Left cardiac atrium (tissue), 4 donors: ENCODE measurements at regions of chr10 and their contacts with region 1.

Region 1: GRCh38 chr10:123008439-123009205 is at the starts of genes ACADSB and IKZF5:
- DNase-seq: peak; percentile 96
- ATAC-seq: peak; percentile 99
- total RNA-seq, gene ACADSB: 51.3 to 55.1 TPM
- total RNA-seq, gene IKZF5: 10.4 to 12.1 TPM

Region 2: DNA sequence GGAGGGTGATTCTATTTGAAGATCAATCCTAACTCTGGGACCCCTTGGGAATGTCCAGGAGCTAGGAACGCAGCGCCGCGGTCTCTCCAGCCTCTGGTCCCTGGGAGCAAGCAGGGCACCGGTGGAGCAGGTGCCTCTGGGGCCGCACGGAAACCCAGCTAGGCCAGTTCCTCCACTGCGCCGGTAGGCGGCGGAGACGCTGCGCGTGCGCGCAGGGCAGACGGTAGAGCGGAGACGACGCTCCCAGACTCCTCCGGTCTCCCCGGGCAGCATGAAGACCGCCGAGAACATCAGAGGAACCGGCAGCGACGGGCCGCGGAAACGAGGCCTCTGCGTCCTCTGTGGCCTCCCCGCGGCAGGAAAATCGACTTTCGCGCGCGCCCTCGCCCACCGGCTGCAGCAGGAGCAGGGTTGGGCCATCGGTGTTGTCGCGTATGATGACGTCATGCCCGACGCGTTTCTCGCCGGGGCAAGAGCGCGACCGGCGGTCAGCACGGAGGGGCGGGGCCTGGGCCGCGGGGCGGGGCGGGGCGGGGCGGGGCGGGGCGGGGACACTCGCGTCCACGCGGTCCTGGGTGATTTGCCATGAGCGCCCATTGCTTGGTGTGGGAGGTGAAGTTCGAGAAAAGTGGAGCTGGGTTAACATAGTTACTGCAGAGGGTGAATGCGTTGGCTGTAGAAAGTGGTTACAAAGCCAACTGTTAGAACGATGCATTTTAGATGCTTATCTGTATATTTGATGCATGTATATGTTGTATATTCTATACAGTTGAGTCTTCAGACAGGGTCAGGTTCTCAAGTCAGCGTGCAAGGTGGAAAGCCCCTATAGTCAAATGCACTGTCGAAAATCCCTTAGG is 28.2 kb before region 1 on chr10 and contains the start of gene PSTK:
- intact Hi-C with region 1: loop called in 1 of 2 experiments (anchors 2 kb)
- DNase-seq: peak; percentile 96
- ATAC-seq: peak; percentile 99
- total RNA-seq, gene PSTK: 3.1 to 3.6 TPM

Region 3: DNA sequence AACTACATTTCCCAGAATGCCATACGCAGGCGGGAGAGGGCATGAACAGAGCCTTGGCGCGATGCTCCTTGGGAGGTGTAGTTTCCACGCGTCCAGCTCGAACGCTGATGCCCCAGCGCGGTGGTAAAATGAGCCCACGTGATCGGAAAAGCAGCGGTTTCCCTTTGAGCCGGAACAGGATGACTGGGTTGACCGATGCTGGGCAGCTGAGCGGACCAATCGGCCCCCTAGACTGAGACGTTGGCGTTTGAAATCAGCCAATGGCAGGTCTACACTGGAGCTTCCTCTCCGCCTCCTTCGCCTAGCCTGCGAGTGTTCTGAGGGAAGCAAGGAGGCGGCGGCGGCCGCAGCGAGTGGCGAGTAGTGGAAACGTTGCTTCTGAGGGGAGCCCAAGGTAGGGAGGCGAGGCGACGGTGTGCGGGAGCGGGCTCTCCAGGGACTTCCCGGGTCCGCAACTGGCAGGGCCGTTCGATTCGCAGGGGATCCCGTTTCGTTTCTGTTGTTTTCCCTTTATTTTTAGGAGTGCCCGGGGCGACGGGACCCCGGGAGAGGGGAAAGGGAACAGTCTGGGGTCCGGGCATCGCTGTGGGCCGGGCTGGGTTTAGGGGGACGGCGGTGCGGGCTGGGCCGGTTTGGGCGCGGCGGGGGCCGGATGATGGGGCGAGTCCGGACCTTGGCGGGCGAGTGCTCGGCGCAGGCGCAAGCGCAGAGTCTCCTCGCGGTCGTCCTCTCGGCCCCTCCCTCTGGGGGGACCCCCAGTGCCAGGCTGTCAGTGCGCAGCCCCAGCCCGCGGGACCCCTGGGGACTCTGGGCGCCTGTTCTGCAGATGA is 145.7 kb after region 1 on chr10 and contains the start of gene BUB3:
- intact Hi-C with region 1: loop called in 1 of 2 experiments (anchors 10 kb)
- DNase-seq: peak; percentile 99
- ATAC-seq: peak; percentile 99 to 100
- total RNA-seq, gene BUB3: 38.0 to 41.3 TPM